Mucosa of descending colon (tissue), 3 donors: ENCODE measurements at regions of chr10 and their contacts with region 1.

Region 1: DNA sequence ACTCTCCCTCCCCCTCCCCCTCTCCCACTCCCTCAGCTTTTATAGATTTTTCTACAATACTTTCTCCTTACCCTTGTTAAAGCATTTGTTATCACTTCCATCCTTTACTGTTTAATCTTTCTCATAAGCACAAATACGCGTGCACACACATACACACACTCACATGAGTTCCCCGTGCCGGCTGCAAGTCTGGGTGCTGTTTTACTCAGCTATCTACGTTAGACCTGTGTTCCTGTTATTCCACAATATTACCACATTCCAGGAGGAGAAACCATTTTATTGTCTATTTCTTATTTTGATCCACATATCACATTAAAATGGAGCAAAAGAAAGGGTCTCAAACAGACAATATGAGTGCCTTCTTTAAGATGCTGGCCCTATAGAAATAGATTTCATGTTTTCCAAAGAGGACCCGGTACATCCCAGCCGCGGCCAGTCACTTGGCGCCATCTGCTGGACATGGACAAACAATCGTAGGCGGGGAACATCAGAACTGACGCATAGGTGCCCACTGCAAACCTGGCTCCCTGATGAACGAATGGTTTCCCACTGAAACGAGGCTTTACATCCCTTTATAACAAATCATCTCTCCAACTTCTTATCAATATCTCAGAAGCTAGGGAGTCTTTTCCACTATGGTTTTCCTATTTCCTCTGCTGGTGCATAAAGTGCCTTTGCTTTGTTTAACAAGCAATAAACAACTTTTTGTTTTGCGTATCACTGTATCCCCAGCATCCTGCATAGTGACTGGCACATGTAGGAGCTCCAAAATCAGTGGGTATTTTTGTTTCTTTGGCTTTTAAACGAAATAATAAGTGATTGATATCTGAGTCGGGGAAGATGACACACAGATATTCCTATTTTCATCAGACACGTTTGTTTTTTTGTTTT is 25.2 kb upstream of the OPTN start:
- DNase-seq: peak in 2 of 3 donors; percentile 67 to 75
- ATAC-seq: peak; percentile 86
- H3K4me3 ChIP-seq: no peak overlapping the region
- H3K4me1 ChIP-seq: no peaks in the 10 kb centered on the region
- CTCF ChIP-seq: peak; percentile 75

Region 2: GRCh38 chr10:12252882-12253546 is 821.8 kb before region 1 on chr10:
- intact Hi-C with region 1: loop called in 1 of 2 experiments (anchors 10 kb)
- DNase-seq: peak in 1 of 3 donors; percentile 30
- ATAC-seq: peak; percentile 64
- H3K4me3 ChIP-seq: no peak overlapping the region
- H3K4me1 ChIP-seq: no peaks in the 10 kb centered on the region
- CTCF ChIP-seq: no peak